A673 (cell line): ENCODE measurements at regions of chr2 and their contacts with region 1.

Region 1: DNA sequence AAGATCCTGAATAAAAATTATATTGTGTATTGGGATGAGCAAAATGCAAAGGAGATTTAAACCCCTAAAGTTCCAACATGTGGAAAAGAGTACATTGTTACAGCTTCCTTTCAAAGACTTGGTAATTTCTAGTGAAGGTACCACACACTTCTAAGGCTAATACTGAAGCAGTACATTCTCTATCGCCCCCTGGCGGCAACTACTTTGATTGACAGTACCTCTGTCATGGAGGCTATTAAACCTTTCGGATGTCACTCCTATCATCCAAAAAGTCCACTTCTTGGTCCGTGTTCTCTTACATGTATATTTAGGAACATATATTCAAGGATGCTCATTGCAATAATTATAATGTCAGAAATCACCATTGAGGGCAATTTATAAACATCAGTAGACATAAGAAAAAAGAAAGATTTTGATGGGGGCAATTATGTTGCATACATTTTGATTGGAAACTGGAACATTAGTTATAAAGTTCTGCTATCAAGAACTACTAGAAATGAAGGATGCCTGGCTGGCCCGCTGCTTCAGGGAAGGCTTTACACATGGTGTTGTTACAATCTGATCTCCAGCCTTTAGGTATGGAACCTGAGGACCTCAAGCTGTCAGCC is 601.6 kb downstream of the CPS1 start:
- DNase-seq: peak; percentile 79
- H3K4me3 ChIP-seq: no peak overlapping the region
- H3K27ac ChIP-seq: no peak overlapping the region
- H3K4me1 ChIP-seq: no peaks in the 10 kb centered on the region
- H3K27me3 ChIP-seq: no peaks in the 10 kb centered on the region
- CTCF ChIP-seq: peak; percentile 95

Region 2: GRCh38 chr2:209463226-209463625 is 1694.7 kb before region 1 on chr2:
- CTCF ChIA-PET with region 1: no interaction called
- POLR2A ChIA-PET with region 1: no interaction called
- intact Hi-C with region 1: no loop called
- DNase-seq: no peak
- H3K4me3 ChIP-seq: no peak overlapping the region
- H3K27ac ChIP-seq: no peak overlapping the region
- H3K4me1 ChIP-seq: no peaks in the 10 kb centered on the region
- H3K27me3 ChIP-seq: no peaks in the 10 kb centered on the region
- CTCF ChIP-seq: peak; percentile 39; the same call in 1 of the 2 replicates

Region 3: GRCh38 chr2:210617732-210618330 is 540.1 kb before region 1 on chr2:
- CTCF ChIA-PET with region 1: interaction called, 3 read pairs
- POLR2A ChIA-PET with region 1: no interaction called
- intact Hi-C with region 1: loop called (anchors 5 kb)
- DNase-seq: peak; percentile 66
- H3K4me3 ChIP-seq: no peak overlapping the region
- H3K27ac ChIP-seq: no peak overlapping the region
- H3K4me1 ChIP-seq: peaks cover 5% of the 10 kb centered on the region
- H3K27me3 ChIP-seq: no peaks in the 10 kb centered on the region
- CTCF ChIP-seq: peak; percentile 80

Region 4: GRCh38 chr2:210663631-210664089 is 494.3 kb before region 1 on chr2:
- CTCF ChIA-PET with region 1: no interaction called
- POLR2A ChIA-PET with region 1: no interaction called
- intact Hi-C with region 1: loop called (anchors 2 kb)
- DNase-seq: peak; percentile 54
- H3K4me3 ChIP-seq: no peak overlapping the region
- H3K27ac ChIP-seq: no peak overlapping the region
- H3K4me1 ChIP-seq: no peaks in the 10 kb centered on the region
- H3K27me3 ChIP-seq: no peaks in the 10 kb centered on the region
- CTCF ChIP-seq: peak; percentile 56

Region 5: DNA sequence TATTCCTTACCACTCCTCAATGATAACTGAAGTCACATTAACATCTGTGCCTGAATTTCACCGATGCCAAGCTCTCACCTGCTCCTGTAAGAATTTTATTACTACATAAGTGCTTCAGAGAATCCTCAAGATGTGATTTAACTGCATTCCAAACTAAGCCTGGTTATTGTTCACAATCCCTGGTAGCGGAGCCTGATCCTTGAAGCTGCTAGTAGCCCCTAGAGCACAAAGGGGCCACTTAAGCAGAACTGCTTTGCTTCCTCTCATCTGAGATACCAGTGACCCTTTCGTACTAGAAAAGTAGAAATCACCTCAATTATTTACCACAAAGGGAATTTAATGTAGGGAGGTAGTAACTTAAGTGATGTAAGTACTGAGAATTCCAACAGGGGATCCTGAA is 71.9 kb before region 1 on chr2:
- CTCF ChIA-PET with region 1: interaction called, 4 read pairs
- POLR2A ChIA-PET with region 1: no interaction called
- intact Hi-C with region 1: loop called (anchors 2 kb)
- DNase-seq: no peak
- H3K4me3 ChIP-seq: no peak overlapping the region
- H3K27ac ChIP-seq: no peak overlapping the region
- H3K4me1 ChIP-seq: peaks cover 7% of the 10 kb centered on the region
- H3K27me3 ChIP-seq: no peaks in the 10 kb centered on the region
- CTCF ChIP-seq: no peak